ENCODE measurements at regions of chr1 and their contacts with region 1.

Region 1: GRCh38 chr1:77659879-77660593 is 22.4 kb downstream of the ZZZ3 start:
- DNase-seq: no peak
- ATAC-seq: peak; percentile 35; the same call in 1 of the 2 replicates
- H3K4me3 ChIP-seq: no peak overlapping the region
- H3K27ac ChIP-seq: no peak overlapping the region
- H3K4me1 ChIP-seq: peaks cover 3% of the 10 kb centered on the region; the same call in 1 of the 2 replicates
- H3K27me3 ChIP-seq: no peaks in the 10 kb centered on the region
- CTCF ChIP-seq: no peak

Region 2: GRCh38 chr1:76659171-76659940 is 1000.7 kb before region 1 on chr1:
- CTCF ChIA-PET with region 1: no interaction called
- POLR2A ChIA-PET with region 1: no interaction called
- in situ Hi-C with region 1: no loop called
- intact Hi-C with region 1: no loop called
- DNase-seq: no peak
- ATAC-seq: no peak
- H3K4me3 ChIP-seq: no peak overlapping the region
- H3K27ac ChIP-seq: no peak overlapping the region
- H3K4me1 ChIP-seq: no peaks in the 10 kb centered on the region
- H3K27me3 ChIP-seq: no peaks in the 10 kb centered on the region
- CTCF ChIP-seq: no peak

Region 3: DNA sequence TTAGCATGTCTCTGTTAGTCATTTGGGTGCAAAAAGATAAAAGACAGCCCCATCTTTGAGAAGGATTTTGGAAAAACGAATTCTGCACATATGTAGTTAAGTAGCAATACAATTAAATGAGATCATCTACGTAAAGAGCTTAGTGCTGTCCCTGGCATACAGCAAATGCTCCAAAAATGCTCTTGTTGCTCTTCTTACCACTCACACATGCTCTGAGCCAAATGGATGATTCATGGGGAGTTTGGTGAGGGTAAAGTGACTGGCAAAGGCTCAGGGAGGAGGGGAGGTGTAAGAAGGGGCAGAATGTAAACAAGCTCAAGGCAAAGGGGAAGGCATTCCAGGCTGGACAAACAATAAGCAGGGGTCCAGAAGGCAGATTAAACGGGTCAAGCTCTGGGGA is 186.3 kb before region 1 on chr1:
- CTCF ChIA-PET with region 1: no interaction called
- POLR2A ChIA-PET with region 1: interaction called, 10 read pairs
- in situ Hi-C with region 1: no loop called
- intact Hi-C with region 1: no loop called
- DNase-seq: peak; percentile 8
- ATAC-seq: no peak
- H3K4me3 ChIP-seq: no peak overlapping the region
- H3K27ac ChIP-seq: no peak overlapping the region
- H3K4me1 ChIP-seq: no peaks in the 10 kb centered on the region
- H3K27me3 ChIP-seq: no peaks in the 10 kb centered on the region
- CTCF ChIP-seq: no peak